Calu3 (cell line): ENCODE measurements at regions of chr1 and their contacts with region 1.

Region 1: GRCh38 chr1:18597160-18598042 is 33.2 kb upstream of the PAX7 start:
- DNase-seq: peak; percentile 62
- H3K4me3 Mint-ChIP-seq: no peak overlapping the region
- H3K27ac Mint-ChIP-seq: no peak overlapping the region
- H3K4me1 Mint-ChIP-seq: no peaks in the 10 kb centered on the region
- H3K27me3 Mint-ChIP-seq: peaks cover 37% of the 10 kb centered on the region
- CTCF ChIP-seq: peak; percentile 88

Region 2: GRCh38 chr1:18608534-18608933 is 11.1 kb after region 1 on chr1:
- CTCF ChIA-PET with region 1: no interaction called
- intact Hi-C with region 1: no loop called
- DNase-seq: no peak
- H3K4me3 Mint-ChIP-seq: no peak overlapping the region
- H3K27ac Mint-ChIP-seq: no peak overlapping the region
- H3K4me1 Mint-ChIP-seq: no peaks in the 10 kb centered on the region
- H3K27me3 Mint-ChIP-seq: peaks cover 22% of the 10 kb centered on the region
- CTCF ChIP-seq: no peak

Region 3: DNA sequence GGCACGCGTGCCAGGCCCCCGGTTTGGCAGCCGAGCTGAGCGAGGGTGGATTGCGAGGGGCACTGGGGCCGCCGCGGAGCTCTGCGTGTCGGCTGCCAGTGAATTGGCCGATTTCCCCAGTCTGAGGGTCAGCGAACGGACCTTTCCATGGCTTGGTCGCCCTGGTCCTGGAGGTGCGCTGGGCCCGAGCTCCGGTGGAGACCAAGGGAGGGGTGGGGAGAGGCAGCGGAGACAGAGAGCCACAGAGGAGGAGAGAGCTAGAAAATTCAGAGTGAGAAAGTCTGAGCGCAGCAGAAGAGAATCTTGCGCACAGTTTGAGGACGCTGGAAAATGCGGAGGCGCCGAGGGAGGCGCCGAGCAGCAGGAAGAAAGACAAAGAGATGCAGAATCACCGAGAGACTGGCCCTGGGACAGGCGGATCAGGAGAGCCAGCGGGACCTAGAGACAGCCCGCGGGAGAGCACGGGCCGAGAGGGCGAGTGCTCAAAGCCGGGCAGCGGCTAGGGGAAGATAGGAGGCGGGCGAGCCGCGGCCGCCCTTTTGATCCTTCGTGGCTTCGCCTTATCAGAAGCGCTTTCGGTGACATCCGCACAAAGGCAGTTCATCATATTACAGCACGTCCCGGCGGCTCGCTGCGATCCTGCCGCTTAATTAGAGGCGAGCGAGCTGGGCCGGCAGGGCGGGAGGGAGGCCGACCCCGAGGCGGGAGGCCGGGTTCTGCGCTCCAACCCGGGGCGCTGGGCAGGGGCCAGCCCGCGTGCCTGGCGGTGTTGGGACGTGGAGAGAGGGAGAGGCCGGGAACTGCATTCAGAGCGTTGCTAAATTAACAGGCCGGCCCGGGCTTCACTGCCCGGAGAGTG is 46.0 kb after region 1 on chr1:
- CTCF ChIA-PET with region 1: no interaction called
- intact Hi-C with region 1: no loop called
- DNase-seq: no peak
- H3K4me3 Mint-ChIP-seq: peak overlapping the region; percentile 27
- H3K27ac Mint-ChIP-seq: no peak overlapping the region
- H3K4me1 Mint-ChIP-seq: peaks cover 32% of the 10 kb centered on the region
- H3K27me3 Mint-ChIP-seq: peaks cover 98% of the 10 kb centered on the region
- CTCF ChIP-seq: no peak

Region 4: GRCh38 chr1:18681423-18681835 is 84.0 kb after region 1 on chr1:
- CTCF ChIA-PET with region 1: interaction called, 6 read pairs
- intact Hi-C with region 1: loop called (anchors 5 kb)
- DNase-seq: peak; percentile 27
- H3K4me3 Mint-ChIP-seq: no peak overlapping the region
- H3K27ac Mint-ChIP-seq: no peak overlapping the region
- H3K4me1 Mint-ChIP-seq: no peaks in the 10 kb centered on the region
- H3K27me3 Mint-ChIP-seq: peaks cover 73% of the 10 kb centered on the region
- CTCF ChIP-seq: peak; percentile 74

Region 5: DNA sequence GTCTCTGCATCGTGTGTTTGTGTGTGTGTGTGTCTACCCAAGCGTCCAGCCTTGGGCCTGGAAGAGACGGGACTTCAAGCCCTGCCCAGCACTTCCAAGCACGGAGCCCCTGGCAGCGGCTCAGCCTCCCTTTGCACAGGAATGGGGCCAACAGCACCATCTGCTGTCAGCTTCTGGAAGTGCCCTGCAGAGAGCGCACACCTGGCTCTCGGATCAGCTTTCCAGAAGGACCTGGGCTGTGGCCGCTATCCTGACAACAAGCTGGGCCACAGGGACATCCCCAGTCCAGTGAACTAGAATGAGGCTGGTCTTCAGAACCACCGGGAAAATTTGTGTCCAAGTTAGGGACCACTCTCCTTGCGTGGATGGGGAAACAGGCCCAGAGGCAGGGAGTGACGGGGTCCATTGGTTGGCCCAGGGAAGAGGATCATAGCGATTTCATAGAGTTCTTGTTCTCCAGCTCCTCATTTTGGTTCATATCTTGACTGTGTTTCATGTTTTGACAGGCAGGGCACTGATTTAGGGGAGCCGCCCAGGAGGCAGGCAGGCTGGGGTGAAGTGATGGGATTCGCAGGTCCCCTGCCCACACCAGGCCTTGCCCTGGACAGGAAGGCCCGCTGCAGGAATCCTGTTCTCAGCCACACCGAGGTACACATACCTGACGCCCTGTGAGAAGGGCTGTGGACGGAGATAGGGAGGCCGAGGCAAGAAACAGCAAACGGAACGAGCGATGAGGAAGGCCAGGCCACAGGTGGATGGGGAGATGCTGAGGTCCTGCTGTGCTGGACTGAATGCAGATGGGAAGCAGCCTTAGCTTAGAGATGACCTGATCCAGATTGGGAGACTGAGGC is 223.6 kb after region 1 on chr1:
- CTCF ChIA-PET with region 1: interaction called, 9 read pairs
- intact Hi-C with region 1: loop called (anchors 1 kb)
- DNase-seq: peak; percentile 79
- H3K4me3 Mint-ChIP-seq: no peak overlapping the region
- H3K27ac Mint-ChIP-seq: no peak overlapping the region
- H3K4me1 Mint-ChIP-seq: no peaks in the 10 kb centered on the region
- H3K27me3 Mint-ChIP-seq: peaks cover 88% of the 10 kb centered on the region
- CTCF ChIP-seq: peak; percentile 66